ENCODE measurements at regions of chr5 and their contacts with region 1.

Region 1: GRCh38 chr5:132951897-132952296 is 11.5 kb downstream of the AFF4 start:
- DNase-seq: no peak
- ATAC-seq: no peak

Region 2: DNA sequence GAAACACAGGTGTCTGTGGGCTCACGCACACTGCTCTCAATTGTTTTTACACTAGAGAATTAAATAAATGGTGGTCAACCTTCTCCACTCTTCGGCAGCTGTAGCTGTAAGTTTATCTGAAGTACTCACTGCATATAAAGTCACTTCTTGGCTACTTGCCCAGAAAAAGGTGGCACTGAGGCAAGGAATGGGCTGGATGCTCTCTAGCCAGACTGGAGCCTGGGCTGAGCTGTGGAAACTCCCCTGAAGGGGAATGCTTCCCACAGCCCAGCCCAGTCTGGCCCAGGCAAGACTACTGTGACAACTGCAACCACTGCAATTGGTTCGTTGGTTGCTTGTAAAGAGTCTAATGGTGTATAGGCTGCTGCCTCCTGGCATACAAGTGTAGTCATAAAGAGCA is 74.0 kb before region 1 on chr5:
- intact Hi-C with region 1: loop called (anchors 10 kb)
- DNase-seq: peak; percentile 53
- ATAC-seq: peak; percentile 91

Region 3: DNA sequence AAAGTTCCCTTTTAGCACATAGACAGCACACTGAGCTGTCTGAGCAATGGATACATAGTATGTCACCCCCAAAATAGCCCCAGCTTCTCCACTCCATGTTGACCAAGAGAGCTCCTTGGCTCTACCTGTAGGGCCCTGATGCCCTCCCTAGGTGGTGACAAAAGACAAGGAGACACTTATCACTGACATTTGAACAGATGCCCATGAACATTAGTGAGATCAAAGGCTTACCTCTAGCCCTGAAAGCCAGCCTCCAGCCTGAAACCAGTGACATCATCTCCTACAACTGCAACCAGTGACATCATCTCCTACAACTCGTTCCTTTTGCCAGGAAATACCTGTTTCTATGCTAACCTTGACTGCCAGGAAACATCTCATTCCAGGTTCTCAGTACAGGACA is 537.7 kb after region 1 on chr5:
- intact Hi-C with region 1: no loop called
- DNase-seq: no peak
- ATAC-seq: no peak